ENCODE measurements at regions of chr21 and their contacts with region 1.

Region 1: DNA sequence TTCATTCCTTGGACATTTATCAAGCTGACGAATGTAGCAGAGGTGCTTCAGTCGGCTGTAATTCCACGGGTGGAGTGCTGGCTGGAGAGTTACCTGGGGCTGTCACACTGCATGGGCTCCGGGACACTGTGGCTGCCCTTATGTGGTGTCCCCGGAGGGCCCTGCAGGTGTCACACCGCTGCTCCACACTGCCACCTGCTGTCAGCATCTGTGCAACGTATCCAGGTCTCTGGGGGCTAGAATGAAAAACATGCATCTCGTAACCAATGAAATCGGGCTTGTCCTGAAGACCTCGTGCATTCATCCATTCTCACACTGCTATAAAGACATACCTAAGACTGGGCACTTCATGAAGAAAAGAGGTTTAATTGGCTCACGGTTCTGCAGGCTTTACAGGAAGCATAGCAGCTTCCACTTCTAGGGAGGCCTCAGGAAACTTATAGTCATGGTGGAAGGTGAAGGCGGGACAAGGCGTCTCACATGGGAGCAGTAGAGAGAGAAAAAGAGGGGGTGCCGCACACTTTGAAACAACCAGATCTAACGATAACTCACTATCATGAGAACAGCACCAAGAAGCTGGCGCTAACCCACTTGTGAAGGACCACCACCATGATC is 46.7 kb upstream of the PCBP3 start:
- DNase-seq: peak; percentile 64 to 73
- ATAC-seq: peak; percentile 68 to 85 (median 78)
- H3K4me3 ChIP-seq: no peak overlapping the region
- H3K27ac ChIP-seq: no peak overlapping the region
- H3K4me1 ChIP-seq: peaks cover 0 to 6% (median 0%) of the 10 kb centered on the region in 9 donors
- H3K27me3 ChIP-seq: peaks cover 0 to 43% (median 18%) of the 10 kb centered on the region in 7 donors
- CTCF ChIP-seq: peak; percentile 52 to 90 (median 79)

Region 2: DNA sequence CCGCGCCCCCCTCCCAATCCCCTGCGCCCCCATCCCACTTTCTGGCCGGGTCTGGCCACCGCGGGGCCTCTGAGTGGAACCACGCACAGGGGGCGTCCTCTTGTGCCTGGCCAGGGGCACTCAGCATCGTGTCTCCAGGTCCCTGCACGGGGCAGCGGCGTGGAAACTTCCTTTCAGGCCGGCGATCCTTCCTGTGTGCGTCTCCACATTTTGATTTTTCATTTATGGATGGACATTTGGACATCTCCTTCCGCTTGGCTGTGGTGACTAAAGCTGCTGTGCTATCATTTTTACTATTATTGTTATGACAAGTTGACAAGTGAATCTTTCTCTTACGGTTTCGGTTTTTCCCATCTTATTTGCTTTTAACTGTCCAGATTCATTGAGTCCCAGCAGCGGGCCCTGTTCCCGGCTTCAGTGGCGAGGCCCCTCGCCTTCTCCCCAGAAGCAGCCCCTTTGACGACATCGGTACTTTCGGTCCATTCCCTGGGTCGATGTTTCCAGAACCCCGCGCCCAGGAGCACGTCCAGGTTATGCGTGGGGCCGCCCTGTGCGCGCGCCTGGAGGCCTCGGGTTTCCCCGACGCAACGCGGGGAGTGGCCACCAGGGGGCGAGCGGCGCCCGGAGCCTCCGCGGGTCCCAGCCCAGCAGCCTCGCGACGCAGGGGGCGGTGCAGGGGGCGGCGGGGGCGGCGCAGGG is 42.2 kb before region 1 on chr21:
- intact Hi-C with region 1: loop called in 6 of 10 experiments (anchors 1 to 5 kb)
- DNase-seq: peak; percentile 73 to 90
- ATAC-seq: peak; percentile 68 to 87 (median 82)
- H3K4me3 ChIP-seq: peak overlapping the region in 9 of 10 donors; percentile 37 to 72 (median 56)
- H3K27ac ChIP-seq: peak overlapping the region in 4 of 10 donors; percentile 10 to 92 (median 60)
- H3K4me1 ChIP-seq: peaks cover 0 to 43% (median 6%) of the 10 kb centered on the region in 9 donors
- H3K27me3 ChIP-seq: peaks cover 0 to 18% (median 0%) of the 10 kb centered on the region in 7 donors
- CTCF ChIP-seq: peak; percentile 74 to 82 (median 78)

Region 3: DNA sequence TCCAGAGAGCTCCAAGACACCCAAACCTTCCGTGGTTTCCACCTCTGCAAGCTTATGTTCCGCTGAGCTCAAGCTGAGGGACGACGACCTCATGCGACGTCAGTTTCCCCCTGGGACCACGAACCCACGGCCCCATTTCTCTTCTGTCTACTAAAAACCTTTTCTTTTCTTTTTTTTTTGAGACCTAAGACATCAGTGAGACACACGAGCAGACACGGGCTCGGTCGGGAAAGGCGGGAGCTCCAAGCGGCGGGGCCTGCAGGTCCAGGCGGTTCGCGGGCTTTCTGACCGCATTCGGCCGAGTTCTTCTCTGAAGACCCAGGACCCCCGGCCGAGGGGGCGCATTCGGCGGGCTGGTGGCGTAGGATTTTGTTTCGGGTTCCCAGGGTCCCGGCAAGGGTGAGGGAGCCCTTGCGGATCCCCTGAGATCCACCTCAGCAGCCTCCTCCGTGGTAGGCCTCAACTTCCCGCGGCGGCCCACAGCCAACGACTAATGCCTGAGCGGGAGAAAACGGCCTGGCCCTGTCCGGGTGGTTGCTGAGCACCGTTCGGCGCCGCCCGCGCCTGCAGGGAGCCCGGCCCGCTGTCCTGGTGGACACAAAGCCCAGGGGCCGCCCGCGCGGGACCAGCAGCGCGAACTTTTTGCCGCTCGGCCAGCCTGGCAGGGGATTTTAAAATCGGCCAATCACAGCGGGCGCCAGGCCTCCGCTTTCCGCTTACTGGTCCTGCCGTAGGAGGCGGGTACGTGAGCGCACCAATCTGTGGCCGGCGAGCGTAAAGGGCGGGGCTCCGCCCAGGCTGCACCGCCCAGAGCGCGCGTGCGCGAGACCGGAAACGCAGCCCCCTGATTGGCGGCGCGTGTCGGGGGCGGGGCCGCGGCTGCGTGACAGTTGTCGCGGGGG is 726.7 kb after region 1 on chr21 and contains the start of gene C21orf58:
- intact Hi-C with region 1: no loop called
- DNase-seq: peak; percentile 97 to 98
- ATAC-seq: peak; percentile 94 to 98 (median 96)
- H3K4me3 ChIP-seq: peak within 1 kb of the TSS; percentile 81 to 100 (median 92)
- H3K27ac ChIP-seq: peak within 1 kb of the TSS; percentile 92 to 99 (median 97)
- H3K4me1 ChIP-seq: peaks cover 6 to 46% (median 28%) of the 10 kb centered on the region in 9 donors
- H3K27me3 ChIP-seq: no peaks in the 10 kb centered on the region
- CTCF ChIP-seq: no peak
- total RNA-seq, gene C21orf58: 0.98 to 2.0 (median 1.3) TPM

Measured in heart right ventricle (tissue), 16 donors.